Aorta (tissue), 5 donors: ENCODE measurements at regions of chr12 and their contacts with region 1.

Region 1: GRCh38 chr12:2284857-2285256 is 232.1 kb downstream of the CACNA1C start:
- DNase-seq: peak; percentile 85 to 92
- ATAC-seq: peak; percentile 79
- H3K4me3 ChIP-seq: no peak overlapping the region
- H3K27ac ChIP-seq: peak overlapping the region in 1 of 2 donors; percentile 60
- H3K4me1 ChIP-seq: peaks cover 3 to 20% of the 10 kb centered on the region in 2 donors
- H3K27me3 ChIP-seq: no peaks in the 10 kb centered on the region

Region 2: GRCh38 chr12:2057041-2057794 is 227.6 kb before region 1 on chr12:
- intact Hi-C with region 1: loop called in 1 of 2 experiments (anchors 5 kb)
- DNase-seq: peak; percentile 73 to 88
- ATAC-seq: peak; percentile 37
- H3K4me3 ChIP-seq: no peak overlapping the region
- H3K27ac ChIP-seq: peak overlapping the region; percentile 3 to 15
- H3K4me1 ChIP-seq: no peaks in the 10 kb centered on the region
- H3K27me3 ChIP-seq: no peaks in the 10 kb centered on the region

Region 3: DNA sequence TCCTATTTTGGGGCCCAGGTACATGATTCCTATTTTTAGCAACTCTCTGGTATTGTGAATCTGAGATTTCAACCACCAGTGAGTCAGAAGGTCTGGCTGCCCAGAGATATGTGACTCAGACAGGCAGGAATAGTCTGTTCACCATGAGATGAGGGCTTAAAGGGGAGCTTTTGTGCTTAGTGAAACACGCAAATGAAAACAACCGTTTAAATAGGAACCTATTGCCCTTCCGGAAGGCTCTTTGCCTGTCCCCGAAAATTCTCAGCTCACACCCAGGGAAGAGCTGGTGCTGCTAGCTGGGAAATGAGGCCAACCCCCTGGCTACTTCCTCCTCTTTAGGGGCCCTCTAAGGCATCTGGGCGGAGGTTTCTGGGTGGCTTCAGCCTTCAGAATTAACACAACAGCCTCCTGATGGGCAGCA is 51.6 kb after region 1 on chr12:
- intact Hi-C with region 1: loop called (anchors 5 kb)
- DNase-seq: peak; percentile 72 to 76
- ATAC-seq: peak; percentile 75
- H3K4me3 ChIP-seq: no peak overlapping the region
- H3K27ac ChIP-seq: peak overlapping the region; percentile 80 to 99
- H3K4me1 ChIP-seq: peaks cover 9 to 18% of the 10 kb centered on the region in 2 donors
- H3K27me3 ChIP-seq: no peaks in the 10 kb centered on the region

Region 4: DNA sequence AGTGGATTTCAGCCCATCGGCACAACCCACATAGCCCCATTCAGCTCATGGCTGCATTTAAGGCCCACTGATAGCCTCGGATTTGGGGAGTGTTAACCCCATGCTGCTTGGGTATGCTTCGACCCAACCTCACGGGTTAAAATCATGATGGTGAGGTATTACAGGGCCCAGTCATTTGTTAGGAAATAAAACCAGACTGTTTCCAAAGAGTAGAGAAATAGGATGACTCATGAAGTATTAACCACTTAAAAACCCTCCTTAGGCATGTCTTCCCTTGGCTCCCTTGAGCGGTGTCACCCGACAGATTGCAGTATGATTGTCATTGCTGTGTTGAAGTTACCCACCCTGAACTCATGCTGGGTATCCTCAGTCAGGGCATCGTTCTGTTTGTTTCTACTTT is 57.0 kb after region 1 on chr12:
- intact Hi-C with region 1: loop called (anchors 5 kb)
- DNase-seq: no peak
- ATAC-seq: no peak
- H3K4me3 ChIP-seq: no peak overlapping the region
- H3K27ac ChIP-seq: no peak overlapping the region
- H3K4me1 ChIP-seq: peaks cover 8 to 11% of the 10 kb centered on the region in 2 donors
- H3K27me3 ChIP-seq: no peaks in the 10 kb centered on the region